Endothelial cell of umbilical vein (primary cell): ENCODE measurements at regions of chr19 and their contacts with region 1.

Region 1: DNA sequence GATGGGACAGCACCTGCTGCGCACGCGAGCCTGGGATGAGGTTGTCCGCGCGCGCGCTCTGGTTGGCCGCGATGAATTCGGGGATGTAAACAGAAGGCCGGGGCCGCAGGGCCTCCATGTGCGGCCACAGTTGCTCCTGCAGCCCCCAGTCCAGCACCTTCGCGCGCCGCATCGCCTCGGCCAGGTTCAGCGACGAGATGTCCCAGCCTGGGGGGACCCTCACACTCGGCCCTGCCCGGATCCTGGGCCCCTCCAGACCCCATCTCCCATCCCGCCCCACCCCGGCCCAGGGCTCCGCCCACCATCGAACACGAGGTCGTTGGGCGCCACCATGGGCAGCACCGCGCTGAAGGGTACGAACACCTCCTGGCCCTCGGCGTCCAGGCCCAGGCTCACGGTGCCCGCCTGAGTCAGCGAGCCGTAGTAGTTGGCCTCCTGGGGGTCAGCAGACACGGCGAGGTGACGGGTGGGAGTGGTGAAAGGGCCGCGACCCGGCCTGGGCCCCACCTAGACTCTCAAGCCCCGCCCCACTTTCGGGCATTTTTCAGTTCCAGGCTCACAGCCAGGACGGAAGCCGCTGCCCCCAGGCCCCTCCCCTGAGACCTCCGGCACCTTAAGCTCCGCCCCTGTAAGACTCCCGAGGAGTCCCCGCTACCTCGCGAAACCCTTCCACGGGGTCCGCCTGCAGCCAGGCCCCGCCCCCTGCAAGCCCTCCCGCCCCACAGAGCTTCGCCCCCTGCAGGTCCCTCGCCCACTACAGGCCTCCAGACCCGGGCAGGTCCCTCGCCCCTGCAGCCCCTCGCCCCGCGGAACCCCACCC is 1.1 kb downstream of the ISYNA1 start:
- DNase-seq: peak; percentile 86
- H3K4me3 ChIP-seq: peak overlapping the region in 2 of 3 experiments; percentile 19 to 75
- H3K27ac ChIP-seq: no peak overlapping the region
- H3K4me1 ChIP-seq: peaks cover 14% of the 10 kb centered on the region
- H3K27me3 ChIP-seq: no peaks in the 10 kb centered on the region
- CTCF ChIP-seq: peak in 1 of 2 donors; percentile 27
- POLR2A ChIP-seq: no peak

Region 2: DNA sequence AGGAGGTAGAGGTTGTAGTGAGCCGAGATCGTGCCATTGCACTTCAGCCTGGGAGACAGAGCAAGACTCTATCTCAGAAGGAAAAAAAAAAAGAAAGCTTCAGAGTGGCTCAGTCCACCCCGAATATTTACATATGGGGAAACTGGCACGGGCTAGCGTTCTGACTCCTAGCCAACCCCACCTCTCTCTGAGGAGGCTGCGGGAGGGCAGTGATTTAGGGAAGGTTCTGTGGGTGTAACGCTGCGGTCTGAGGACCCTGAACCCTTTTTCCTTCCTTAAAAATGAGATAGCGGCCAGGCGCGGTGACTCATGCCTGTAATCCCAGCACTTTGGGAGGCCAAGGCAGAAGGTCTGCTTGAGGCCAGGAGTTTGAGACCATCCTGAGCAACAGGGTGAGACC is 44.5 kb before region 1 on chr19:
- CTCF ChIA-PET with region 1: no interaction called
- POLR2A ChIA-PET with region 1: no interaction called
- dilution Hi-C with region 1: no loop called
- intact Hi-C with region 1: no loop called
- DNase-seq: peak; percentile 49
- H3K4me3 ChIP-seq: no peak overlapping the region
- H3K27ac ChIP-seq: no peak overlapping the region
- H3K4me1 ChIP-seq: peaks cover 6% of the 10 kb centered on the region
- H3K27me3 ChIP-seq: no peaks in the 10 kb centered on the region
- CTCF ChIP-seq: no peak
- POLR2A ChIP-seq: no peak

Region 3: GRCh38 chr19:18419195-18419698 is 17.6 kb before region 1 on chr19 and contains the start of gene SSBP4:
- CTCF ChIA-PET with region 1: interaction called, 7 read pairs
- POLR2A ChIA-PET with region 1: no interaction called
- dilution Hi-C with region 1: no loop called
- intact Hi-C with region 1: loop called (anchors 1 kb)
- DNase-seq: peak; percentile 76
- H3K4me3 ChIP-seq: peak within 1 kb of the TSS; percentile 50 to 73 (median 53)
- H3K27ac ChIP-seq: peak within 1 kb of the TSS; percentile 54
- H3K4me1 ChIP-seq: peaks cover 46% of the 10 kb centered on the region
- H3K27me3 ChIP-seq: no peaks in the 10 kb centered on the region
- CTCF ChIP-seq: peak; percentile 19 to 31
- POLR2A ChIP-seq: peak; percentile 49
- total RNA-seq, gene SSBP4: 140 and 151 TPM in 2 replicates

Region 4: GRCh38 chr19:18450931-18451845 is 14.3 kb after region 1 on chr19:
- CTCF ChIA-PET with region 1: interaction called, 23 read pairs
- POLR2A ChIA-PET with region 1: no interaction called
- dilution Hi-C with region 1: no loop called
- intact Hi-C with region 1: no loop called
- DNase-seq: peak; percentile 65
- H3K4me3 ChIP-seq: no peak overlapping the region
- H3K27ac ChIP-seq: no peak overlapping the region
- H3K4me1 ChIP-seq: no peaks in the 10 kb centered on the region
- H3K27me3 ChIP-seq: no peaks in the 10 kb centered on the region
- CTCF ChIP-seq: peak; percentile 97 to 99
- POLR2A ChIP-seq: no peak

Region 5: GRCh38 chr19:18460900-18461299 is 24.0 kb after region 1 on chr19:
- CTCF ChIA-PET with region 1: interaction called, 11 read pairs
- POLR2A ChIA-PET with region 1: no interaction called
- dilution Hi-C with region 1: no loop called
- intact Hi-C with region 1: no loop called
- DNase-seq: no peak
- H3K4me3 ChIP-seq: no peak overlapping the region
- H3K27ac ChIP-seq: no peak overlapping the region
- H3K4me1 ChIP-seq: peaks cover 10% of the 10 kb centered on the region
- H3K27me3 ChIP-seq: no peaks in the 10 kb centered on the region
- CTCF ChIP-seq: no peak
- POLR2A ChIP-seq: no peak